Cardiac septum (tissue), 1 donor: ENCODE measurements at regions of chr2 and their contacts with region 1.

Region 1: DNA sequence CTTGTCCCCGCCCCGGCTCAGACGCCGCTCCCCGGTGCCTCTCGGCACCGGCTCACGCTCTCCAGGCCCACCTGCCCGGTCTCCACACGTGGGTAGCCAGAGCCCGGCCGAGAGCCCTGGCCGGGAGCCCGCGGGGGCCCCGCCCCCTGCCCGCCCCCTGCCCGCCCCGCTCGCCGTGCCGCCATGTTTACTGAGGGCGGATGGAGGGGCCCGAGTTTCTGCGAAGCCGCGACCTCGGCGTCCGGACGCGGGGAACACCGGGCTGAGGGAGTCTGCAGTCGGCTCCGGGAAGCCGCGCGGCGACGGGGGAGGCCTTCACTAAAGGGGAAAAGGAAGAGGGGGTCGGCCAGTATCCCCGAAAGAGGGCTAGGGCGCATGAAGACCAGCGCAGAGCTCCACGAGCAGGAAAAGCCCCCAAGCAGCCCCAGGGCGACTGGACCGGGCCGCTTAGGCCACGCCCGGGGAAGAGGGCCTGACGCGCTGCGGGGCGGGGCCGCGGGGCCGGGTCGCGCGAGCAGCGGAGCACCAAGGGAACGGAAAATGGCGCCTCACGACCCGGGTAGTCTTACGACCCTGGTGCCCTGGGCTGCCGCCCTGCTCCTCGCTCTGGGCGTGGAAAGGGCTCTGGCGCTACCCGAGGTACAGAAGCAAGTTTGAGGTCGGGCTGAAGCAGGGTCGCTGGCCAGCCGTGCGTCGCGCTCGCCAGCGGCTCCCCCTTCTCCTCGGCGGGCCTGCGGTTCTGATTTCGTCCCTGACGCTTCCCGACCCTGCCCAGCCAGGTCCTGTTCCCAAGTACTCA is at the starts of genes ATRAID and SLC5A6:
- DNase-seq: peak; percentile 95
- total RNA-seq, gene ATRAID: 131 TPM
- total RNA-seq, gene SLC5A6: 11.4 TPM

Region 2: DNA sequence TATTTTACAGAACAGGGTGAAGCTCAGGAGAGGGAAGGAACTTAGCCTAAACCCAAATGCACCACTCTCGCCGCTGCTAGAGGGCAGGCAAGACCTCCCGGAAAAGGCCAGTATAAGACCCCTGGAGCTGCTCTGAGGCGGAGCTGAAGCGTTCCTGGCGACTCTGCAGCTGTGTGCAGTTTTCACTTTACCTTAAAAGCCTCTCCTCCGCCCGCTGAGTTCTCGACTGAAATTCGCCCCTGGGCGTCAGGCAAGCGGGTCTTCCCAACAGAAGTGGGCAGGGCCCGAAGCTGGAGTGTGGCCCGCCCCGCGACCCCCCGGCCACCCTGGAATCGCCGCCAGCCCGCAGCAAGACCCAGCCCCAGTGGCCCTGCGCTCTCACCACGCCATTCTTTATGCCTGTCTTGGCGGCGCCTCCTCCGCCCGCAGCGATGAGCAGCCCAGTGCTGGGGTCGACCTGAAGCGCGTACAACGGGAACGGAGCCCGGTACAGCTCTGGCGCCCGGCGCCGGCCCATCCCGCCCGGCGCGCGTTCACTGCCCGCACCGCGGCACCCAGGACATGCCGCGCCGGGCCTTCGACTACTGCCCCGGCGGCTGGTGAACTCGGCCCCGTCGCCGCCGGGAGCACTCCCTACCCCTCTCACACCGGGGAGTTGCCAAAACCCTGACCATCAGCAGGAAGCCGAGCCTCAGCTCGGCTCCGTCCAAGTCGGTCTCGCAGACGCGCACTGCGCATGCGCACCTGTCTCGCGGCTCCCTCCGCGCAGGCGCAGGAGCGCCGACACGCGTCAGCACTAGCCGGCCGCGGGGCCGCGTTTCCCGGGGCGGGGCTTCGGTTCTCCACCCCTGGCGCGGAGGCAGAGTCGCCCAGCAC is 77.9 kb before region 1 on chr2 and contains the start of gene PREB:
- intact Hi-C with region 1: loop called (anchors 2 kb)
- DNase-seq: peak; percentile 98
- total RNA-seq, gene PREB: 40.4 TPM